PC-9 (cell line): ENCODE measurements at regions of chr15 and their contacts with region 1.

Region 1: GRCh38 chr15:85831415-85832113 is 36.8 kb upstream of the KLHL25 start:
- DNase-seq: peak in 1 of 2 experiments; percentile 39
- H3K4me3 ChIP-seq: no peak overlapping the region
- H3K27ac ChIP-seq: no peak overlapping the region
- H3K4me1 ChIP-seq: peaks cover 2% of the 10 kb centered on the region; the same call in 1 of the 2 replicates
- H3K27me3 ChIP-seq: no peaks in the 10 kb centered on the region
- CTCF ChIP-seq: peak; percentile 57; the same call in 1 of the 2 replicates

Region 2: GRCh38 chr15:85485956-85486567 is 345.5 kb before region 1 on chr15:
- CTCF ChIA-PET with region 1: no interaction called
- POLR2A ChIA-PET with region 1: no interaction called
- intact Hi-C with region 1: loop called (anchors 10 kb)
- DNase-seq: peak; percentile 55 to 56
- H3K4me3 ChIP-seq: no peak overlapping the region
- H3K27ac ChIP-seq: no peak overlapping the region
- H3K4me1 ChIP-seq: 0 out of 2 replicates have a peak, but pooled peaks cover 11% of the 10 kb centered on the region
- H3K27me3 ChIP-seq: no peaks in the 10 kb centered on the region
- CTCF ChIP-seq: peak; percentile 87

Region 3: GRCh38 chr15:85730001-85730820 is 101.4 kb before region 1 on chr15:
- CTCF ChIA-PET with region 1: no interaction called
- POLR2A ChIA-PET with region 1: no interaction called
- intact Hi-C with region 1: loop called (anchors 2 kb)
- DNase-seq: peak in 1 of 2 experiments; percentile 29
- H3K4me3 ChIP-seq: no peak overlapping the region
- H3K27ac ChIP-seq: no peak overlapping the region
- H3K4me1 ChIP-seq: no peaks in the 10 kb centered on the region
- H3K27me3 ChIP-seq: no peaks in the 10 kb centered on the region
- CTCF ChIP-seq: peak; percentile 84

Region 4: GRCh38 chr15:85760531-85761371 is 70.8 kb before region 1 on chr15:
- CTCF ChIA-PET with region 1: no interaction called
- POLR2A ChIA-PET with region 1: no interaction called
- intact Hi-C with region 1: loop called (anchors 2 kb)
- DNase-seq: no peak
- H3K4me3 ChIP-seq: no peak overlapping the region
- H3K27ac ChIP-seq: no peak overlapping the region
- H3K4me1 ChIP-seq: no peaks in the 10 kb centered on the region
- H3K27me3 ChIP-seq: no peaks in the 10 kb centered on the region
- CTCF ChIP-seq: peak; percentile 29; the same call in 1 of the 2 replicates

Region 5: GRCh38 chr15:85800467-85801123 is 31.0 kb before region 1 on chr15:
- CTCF ChIA-PET with region 1: interaction called, 4 read pairs
- POLR2A ChIA-PET with region 1: no interaction called
- intact Hi-C with region 1: loop called (anchors 2 kb)
- DNase-seq: peak; percentile 81 to 83
- H3K4me3 ChIP-seq: no peak overlapping the region
- H3K27ac ChIP-seq: no peak overlapping the region
- H3K4me1 ChIP-seq: peaks cover 13% of the 10 kb centered on the region
- H3K27me3 ChIP-seq: no peaks in the 10 kb centered on the region
- CTCF ChIP-seq: peak; percentile 58; the same call in 1 of the 2 replicates

Region 6: GRCh38 chr15:85871545-85871944 is 40.0 kb after region 1 on chr15:
- CTCF ChIA-PET with region 1: no interaction called
- POLR2A ChIA-PET with region 1: no interaction called
- intact Hi-C with region 1: no loop called
- DNase-seq: no peak
- H3K4me3 ChIP-seq: no peak overlapping the region
- H3K27ac ChIP-seq: no peak overlapping the region
- H3K4me1 ChIP-seq: no peaks in the 10 kb centered on the region
- H3K27me3 ChIP-seq: peaks cover 92% of the 10 kb centered on the region
- CTCF ChIP-seq: no peak